GM18951 (cell line): ENCODE measurements at regions of chr6 and their contacts with region 1.

Region 1: DNA sequence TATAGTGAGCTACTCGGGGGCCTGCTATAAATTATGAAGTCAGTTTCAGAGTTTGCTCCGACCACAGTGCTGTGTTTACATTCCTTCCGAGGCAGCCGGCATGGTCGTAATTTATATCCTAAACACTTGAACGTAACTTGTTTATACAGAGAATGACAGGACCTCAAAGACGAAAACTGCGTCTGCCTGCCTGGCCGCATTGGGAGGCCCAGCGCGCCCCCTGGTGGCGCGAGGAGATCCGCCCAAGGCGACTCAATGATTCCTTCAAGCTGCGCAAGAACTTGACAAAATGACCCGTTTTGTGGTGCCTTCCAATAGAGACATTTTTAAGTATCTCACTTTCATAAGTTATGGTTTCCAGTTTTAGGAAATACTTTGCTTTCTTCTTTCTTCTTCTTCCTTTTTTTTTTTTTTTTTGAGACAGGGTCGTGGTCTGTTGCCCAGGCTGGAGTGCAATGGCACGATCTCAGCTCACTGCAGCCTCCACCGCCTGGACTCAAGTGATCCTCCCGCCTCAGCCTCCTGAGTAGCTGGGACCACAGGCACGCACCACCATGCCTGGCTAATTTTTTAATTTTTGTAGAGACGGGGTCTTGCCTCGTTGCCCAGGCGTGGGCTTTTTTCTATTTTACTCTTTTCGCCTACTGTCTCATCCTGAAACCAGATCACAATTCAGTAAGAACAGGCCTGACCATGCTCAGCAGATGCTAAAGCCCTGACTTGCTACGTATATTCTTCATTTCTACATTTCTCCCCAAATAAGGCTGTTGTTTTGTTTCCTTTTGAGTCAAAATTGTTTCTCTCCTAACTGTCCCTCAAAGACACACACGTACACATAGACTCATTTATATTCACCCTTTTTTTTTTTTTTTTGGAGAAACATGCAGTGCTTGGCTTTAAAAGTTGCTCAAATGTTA is 7.8 kb downstream of the FOXF2 start:
- POLR2A ChIP-seq: no peak

Region 2: DNA sequence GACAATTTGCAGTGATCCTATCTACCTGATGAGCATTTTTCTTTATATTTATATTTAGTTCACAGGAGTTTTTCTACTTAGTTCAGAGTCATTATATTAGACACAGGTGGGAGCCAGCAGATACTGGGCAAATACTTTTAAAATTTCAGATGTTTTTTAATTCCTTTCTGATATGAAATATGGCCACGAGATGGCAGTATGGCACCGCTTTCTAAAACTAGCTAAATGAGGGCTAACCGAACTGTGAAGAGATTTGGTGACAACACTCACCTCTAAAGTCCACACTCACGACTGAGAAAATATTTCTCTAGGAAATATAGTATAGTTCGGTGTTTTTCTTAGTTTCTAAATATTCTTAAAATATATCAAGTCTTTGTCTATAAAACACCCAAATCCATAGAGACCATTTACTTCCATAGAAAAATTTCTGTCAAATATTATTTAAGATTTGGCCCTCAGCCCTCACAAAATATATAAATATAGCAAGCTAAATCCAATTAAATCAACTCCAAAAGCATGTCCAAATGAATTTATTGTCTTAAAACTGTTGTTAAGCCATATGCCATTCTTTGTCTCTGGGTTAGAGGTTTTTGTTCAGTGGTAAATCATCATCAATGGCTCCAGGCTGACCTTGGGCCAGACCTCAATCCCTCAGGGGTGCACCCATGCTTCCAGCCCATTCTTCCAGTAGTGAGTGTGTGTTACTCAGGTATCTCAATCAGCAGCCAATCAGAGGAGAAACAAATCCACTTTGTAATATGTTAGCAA is 803.9 kb before region 1 on chr6:
- in situ Hi-C with region 1: loop called (anchors 25 kb)
- POLR2A ChIP-seq: no peak

Region 3: DNA sequence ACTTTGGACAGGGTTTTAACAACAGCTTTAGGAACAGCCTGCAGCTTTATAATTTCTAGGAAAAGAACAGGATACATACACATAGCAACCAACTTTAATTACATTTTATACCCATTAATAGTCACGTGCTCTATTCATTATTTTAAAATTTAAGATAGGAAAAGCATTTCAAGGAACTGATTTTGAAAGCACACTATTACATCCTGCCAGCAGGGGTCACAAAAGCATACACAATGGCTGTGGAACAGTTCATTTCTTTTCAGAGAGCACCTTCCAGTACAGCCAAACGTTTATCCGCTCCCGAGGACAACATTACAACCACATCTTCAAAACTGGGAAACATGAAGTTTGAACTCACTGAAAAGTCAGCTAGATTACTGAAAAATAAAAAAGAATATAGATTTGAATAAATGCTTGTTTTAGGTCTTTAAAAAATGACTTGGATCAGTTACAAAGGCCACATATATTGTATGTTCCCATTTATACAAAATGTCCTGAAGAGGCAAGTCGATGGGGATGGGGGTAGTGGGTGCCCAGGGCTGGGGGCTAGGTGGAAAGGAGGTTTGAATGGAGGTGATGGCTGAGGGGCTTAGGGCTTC is 599.6 kb before region 1 on chr6:
- in situ Hi-C with region 1: loop called (anchors 25 kb)
- POLR2A ChIP-seq: no peak